ENCODE measurements at regions of chr6 and their contacts with region 1.

Region 1: DNA sequence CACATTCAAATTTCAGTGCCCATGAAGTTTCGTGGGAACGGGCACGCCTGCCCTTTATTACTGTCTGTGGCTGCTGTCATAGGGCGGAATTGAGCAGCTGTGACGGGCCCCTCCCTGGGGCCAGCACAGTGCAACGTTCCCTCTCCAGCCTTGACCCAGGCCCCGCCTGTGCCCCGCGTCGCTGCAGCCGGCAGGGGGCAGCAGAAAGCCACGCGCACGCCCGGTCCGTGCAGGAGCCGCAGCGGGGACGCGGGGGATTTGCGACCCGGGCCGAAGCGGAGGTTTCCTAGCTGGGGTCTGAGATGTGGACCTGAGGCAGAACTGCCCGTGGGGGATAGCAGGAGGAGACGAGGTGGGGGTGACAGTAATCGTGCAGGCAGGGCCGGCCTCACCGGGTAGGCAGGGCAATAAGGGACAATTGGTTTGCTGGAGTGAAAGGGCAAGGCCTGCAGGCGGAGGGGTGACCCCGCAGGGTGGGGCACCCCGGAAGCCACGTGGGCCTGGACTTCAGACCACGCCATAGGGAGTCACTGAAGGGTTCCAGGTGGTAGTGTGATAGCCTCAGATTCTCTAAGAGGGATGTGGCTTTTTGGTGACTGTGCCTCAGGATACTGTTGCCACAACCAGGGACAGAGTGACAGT is 54.4 kb downstream of the SYTL3 start:
- DNase-seq: peak; percentile 92 to 95 (median 94)
- ATAC-seq: peak; percentile 98
- H3K4me3 ChIP-seq: peak overlapping the region; percentile 36
- H3K27ac ChIP-seq: peak overlapping the region; percentile 45; the same call in 2 of the 3 replicates
- H3K4me1 ChIP-seq: peaks cover 26 to 35% of the 10 kb centered on the region in 2 experiments
- H3K27me3 ChIP-seq: peaks cover 0 to 15% of the 10 kb centered on the region in 2 experiments; a peak in 3 of 5 replicates
- CTCF ChIP-seq: peak; percentile 97 to 98 (median 97)
- EP300 ChIP-seq: no peak; the same call in 1 of the 2 replicates
- POLR2A ChIP-seq: no peak
- RAD21 ChIP-seq: peak; percentile 99

Region 2: DNA sequence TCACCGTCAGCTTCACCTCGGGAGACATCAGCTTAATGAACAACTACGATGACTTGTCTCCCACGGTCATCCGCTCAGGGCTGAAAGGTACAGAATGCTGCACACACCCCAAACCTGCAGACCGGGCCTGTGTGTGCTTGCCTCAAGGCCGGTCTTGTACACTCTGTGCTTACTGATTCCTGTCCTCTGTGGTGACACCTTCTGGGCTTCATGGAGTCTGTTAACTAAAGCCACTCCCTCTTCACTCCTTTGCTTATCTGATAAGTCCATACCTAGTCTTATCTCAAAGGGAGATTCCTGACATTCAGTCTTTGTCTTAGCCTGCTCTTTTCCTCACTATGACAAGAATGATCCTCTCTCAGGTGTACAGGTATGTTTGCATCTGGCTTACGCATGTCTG is 252.1 kb before region 1 on chr6:
- CTCF ChIA-PET with region 1: no interaction called
- POLR2A ChIA-PET with region 1: no interaction called
- in situ Hi-C with region 1: no loop called
- intact Hi-C with region 1: no loop called
- DNase-seq: no peak
- ATAC-seq: peak; percentile 43; the same call in 2 of the 3 replicates
- H3K4me3 ChIP-seq: no peak overlapping the region
- H3K27ac ChIP-seq: no peak overlapping the region
- H3K4me1 ChIP-seq: no peaks in the 10 kb centered on the region
- H3K27me3 ChIP-seq: no peaks in the 10 kb centered on the region
- CTCF ChIP-seq: no peak
- EP300 ChIP-seq: no peak
- POLR2A ChIP-seq: no peak
- RAD21 ChIP-seq: no peak

Region 3: DNA sequence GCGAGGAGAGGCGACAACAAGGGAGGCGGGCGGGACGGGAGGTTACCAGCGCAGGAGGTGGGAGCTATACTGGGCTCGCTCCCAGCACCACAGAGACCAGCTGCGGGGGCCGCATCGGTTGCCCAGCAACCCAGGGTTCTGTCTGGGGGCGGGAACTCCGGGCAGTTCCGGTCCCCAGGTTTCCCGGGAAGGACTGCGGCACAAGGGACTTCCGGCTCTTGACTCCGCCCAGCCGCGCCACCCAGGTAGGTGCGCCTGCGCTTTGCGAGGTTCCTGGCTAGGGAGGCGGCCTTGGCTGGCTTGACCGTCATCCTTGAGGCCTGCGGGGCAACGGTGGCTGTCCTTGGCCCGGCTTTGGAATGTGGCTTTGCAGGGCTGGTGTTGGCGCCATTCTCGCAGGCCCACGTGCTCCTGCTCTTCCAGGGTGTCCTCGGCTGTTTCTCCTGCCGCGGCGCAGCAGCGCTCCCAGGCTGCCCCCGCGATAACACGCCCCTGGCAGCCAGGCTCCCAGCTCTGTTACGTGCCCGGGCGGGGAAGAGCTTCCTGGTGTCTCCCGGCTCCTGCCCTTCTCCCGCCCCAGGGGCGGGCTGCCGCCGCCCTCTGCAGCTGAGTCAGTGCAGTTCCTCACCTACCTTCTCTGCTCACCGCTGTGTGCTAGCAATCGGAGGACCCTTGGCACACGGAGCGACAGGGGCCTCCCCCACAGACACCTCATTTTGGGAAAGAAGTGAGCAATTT is 295.5 kb after region 1 on chr6 and contains the start of gene RSPH3:
- CTCF ChIA-PET with region 1: no interaction called
- POLR2A ChIA-PET with region 1: interaction called, 3 read pairs
- in situ Hi-C with region 1: loop called (anchors 25 kb)
- intact Hi-C with region 1: no loop called
- DNase-seq: peak; percentile 99
- ATAC-seq: peak; percentile 98
- H3K4me3 ChIP-seq: peak within 1 kb of the TSS; percentile 68
- H3K27ac ChIP-seq: peak within 1 kb of the TSS; percentile 90
- H3K4me1 ChIP-seq: peaks cover 9 to 22% of the 10 kb centered on the region in 2 experiments; a peak in 4 of 5 replicates
- H3K27me3 ChIP-seq: no peaks in the 10 kb centered on the region
- CTCF ChIP-seq: peak; percentile 37 to 51 (median 50); a peak in 3 of 6 replicates
- EP300 ChIP-seq: peak; percentile 8; the same call in 1 of the 2 replicates
- POLR2A ChIP-seq: peak; percentile 99
- RAD21 ChIP-seq: peak; percentile 57 to 60
- polyA plus RNA-seq, gene RSPH3: 0.52 to 0.68 TPM

Region 4: DNA sequence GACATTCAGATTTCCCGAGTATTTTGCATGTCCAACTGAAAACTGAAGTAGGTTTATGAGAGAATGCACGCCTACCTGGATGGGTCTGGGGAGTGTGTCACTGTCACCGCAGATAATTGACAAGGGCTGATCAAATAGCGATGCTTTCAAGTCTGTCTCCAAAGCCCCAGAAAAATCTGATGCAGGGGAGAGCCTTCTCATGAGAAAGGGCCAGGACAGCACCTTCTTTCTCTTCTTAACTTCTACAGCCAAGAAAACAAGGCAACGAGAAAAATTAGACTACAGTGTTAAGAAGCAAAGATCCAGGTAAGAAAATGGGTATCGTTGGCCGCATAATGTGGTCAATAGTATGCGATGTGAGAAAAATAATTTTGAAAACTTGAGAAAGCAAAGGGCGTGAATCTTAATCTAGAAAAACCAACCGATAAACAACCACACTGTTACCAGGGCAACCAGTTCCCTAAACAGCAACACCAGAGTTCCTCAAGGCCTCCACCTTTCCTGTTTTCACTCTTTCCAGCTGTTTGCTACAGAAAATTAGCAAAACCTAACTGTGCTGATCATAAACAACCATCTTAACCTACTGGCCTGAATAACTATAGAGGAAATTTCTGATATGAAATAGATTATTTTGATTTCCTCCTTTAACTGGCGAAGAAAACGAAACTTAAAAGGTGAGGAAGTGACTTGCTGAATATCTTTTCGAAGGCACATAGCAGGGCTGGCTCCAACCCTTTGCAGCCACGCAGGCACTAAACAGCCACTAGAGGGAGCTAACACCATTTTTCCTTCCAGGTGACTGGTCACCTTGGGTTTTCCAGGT is 337.9 kb after region 1 on chr6:
- CTCF ChIA-PET with region 1: no interaction called
- POLR2A ChIA-PET with region 1: no interaction called
- in situ Hi-C with region 1: no loop called
- intact Hi-C with region 1: loop called (anchors 5 kb)
- DNase-seq: peak; percentile 76 to 86 (median 82)
- ATAC-seq: peak; percentile 97
- H3K4me3 ChIP-seq: no peak overlapping the region
- H3K27ac ChIP-seq: no peak overlapping the region
- H3K4me1 ChIP-seq: no peaks in the 10 kb centered on the region
- H3K27me3 ChIP-seq: peaks cover 53 to 59% of the 10 kb centered on the region in 2 experiments
- CTCF ChIP-seq: peak; percentile 90 to 98 (median 97)
- EP300 ChIP-seq: no peak
- POLR2A ChIP-seq: no peak
- RAD21 ChIP-seq: peak; percentile 76 to 87

Measured in K562 (cell line).